Transverse colon (tissue), 4 donors: ENCODE measurements at regions of chr5 and their contacts with region 1.

Region 1: GRCh38 chr5:3446410-3446997 is 149.1 kb upstream of the IRX1 start:
- DNase-seq: no peak
- H3K4me3 ChIP-seq: no peak overlapping the region
- H3K27ac ChIP-seq: no peak overlapping the region
- H3K4me1 ChIP-seq: no peaks in the 10 kb centered on the region
- H3K27me3 ChIP-seq: no peaks in the 10 kb centered on the region
- CTCF ChIP-seq: no peak
- EP300 ChIP-seq: no peak
- POLR2A ChIP-seq: no peak

Region 2: GRCh38 chr5:3310541-3311261 is 135.8 kb before region 1 on chr5:
- in situ Hi-C with region 1: no loop called
- intact Hi-C with region 1: no loop called
- DNase-seq: no peak
- H3K4me3 ChIP-seq: no peak overlapping the region
- H3K27ac ChIP-seq: no peak overlapping the region
- H3K4me1 ChIP-seq: no peaks in the 10 kb centered on the region
- H3K27me3 ChIP-seq: no peaks in the 10 kb centered on the region
- CTCF ChIP-seq: no peak
- EP300 ChIP-seq: no peak
- POLR2A ChIP-seq: no peak

Region 3: GRCh38 chr5:3694819-3695218 is 248.3 kb after region 1 on chr5:
- in situ Hi-C with region 1: no loop called
- intact Hi-C with region 1: loop called (anchors 10 kb)
- DNase-seq: no peak
- H3K4me3 ChIP-seq: no peak overlapping the region
- H3K27ac ChIP-seq: no peak overlapping the region
- H3K4me1 ChIP-seq: no peaks in the 10 kb centered on the region
- H3K27me3 ChIP-seq: no peaks in the 10 kb centered on the region
- CTCF ChIP-seq: no peak
- EP300 ChIP-seq: no peak
- POLR2A ChIP-seq: no peak